ENCODE measurements at regions of chr19 and their contacts with region 1.

Region 1: DNA sequence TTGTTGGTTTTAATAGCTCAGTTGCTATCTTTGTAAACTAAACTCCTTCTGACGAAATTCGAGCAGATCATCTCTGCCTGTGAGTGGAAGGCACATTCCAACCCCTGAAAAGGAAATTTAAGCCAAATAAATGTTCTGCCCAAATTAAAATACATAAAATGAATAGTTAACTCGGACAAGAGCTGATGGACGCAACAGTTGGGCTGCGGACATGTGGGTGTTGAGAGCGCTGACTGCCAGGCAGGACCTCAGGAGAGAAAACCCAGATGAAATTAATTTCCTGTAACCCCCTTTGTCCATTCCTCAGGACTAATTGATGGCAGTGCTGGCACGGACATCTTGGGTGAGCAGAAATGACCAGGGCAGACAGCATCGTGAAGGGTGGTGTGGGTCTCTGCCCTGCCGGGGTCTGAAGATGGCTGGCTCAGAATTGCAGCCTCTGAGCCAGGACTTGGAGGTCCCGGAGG is 86.5 kb downstream of the TSHZ3 start:
- DNase-seq: peak; percentile 34
- ATAC-seq: peak; percentile 64
- H3K4me3 ChIP-seq: no peak overlapping the region
- H3K27ac ChIP-seq: peak overlapping the region; percentile 4
- H3K4me1 ChIP-seq: peaks cover 11% of the 10 kb centered on the region
- H3K27me3 ChIP-seq: no peaks in the 10 kb centered on the region
- CTCF ChIP-seq: no peak
- POLR2A ChIP-seq: no peak
- RAD21 ChIP-seq: no peak

Region 2: GRCh38 chr19:31037286-31037980 is 225.3 kb before region 1 on chr19:
- CTCF ChIA-PET with region 1: no interaction called
- POLR2A ChIA-PET with region 1: no interaction called
- dilution Hi-C with region 1: no loop called
- in situ Hi-C with region 1: no loop called
- intact Hi-C with region 1: no loop called
- DNase-seq: no peak
- ATAC-seq: no peak
- H3K4me3 ChIP-seq: no peak overlapping the region
- H3K27ac ChIP-seq: no peak overlapping the region
- H3K4me1 ChIP-seq: no peaks in the 10 kb centered on the region
- H3K27me3 ChIP-seq: peaks cover 3% of the 10 kb centered on the region
- CTCF ChIP-seq: no peak
- POLR2A ChIP-seq: no peak
- RAD21 ChIP-seq: no peak

Region 3: DNA sequence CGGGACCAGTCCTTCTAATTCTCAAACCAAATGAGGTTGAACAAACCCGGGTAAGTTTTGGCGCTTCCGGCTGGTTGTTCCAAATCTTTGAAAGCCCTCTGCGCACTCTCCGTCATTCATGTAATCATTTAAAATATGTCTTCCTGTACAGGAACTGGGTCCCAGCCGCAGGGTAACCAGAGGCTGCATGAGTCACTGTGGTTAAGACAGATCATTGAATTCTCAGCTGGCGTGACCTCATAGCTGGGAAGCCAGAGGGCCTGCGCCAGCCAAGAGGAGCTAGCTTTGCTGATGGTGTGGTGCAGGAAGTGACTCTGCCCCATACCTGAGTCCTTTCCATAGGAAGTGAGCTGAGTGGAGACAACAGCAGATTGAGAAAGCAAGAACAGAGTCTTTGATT is 48.7 kb before region 1 on chr19:
- CTCF ChIA-PET with region 1: no interaction called
- POLR2A ChIA-PET with region 1: no interaction called
- dilution Hi-C with region 1: no loop called
- in situ Hi-C with region 1: no loop called
- intact Hi-C with region 1: no loop called
- DNase-seq: peak; percentile 100
- ATAC-seq: peak; percentile 95
- H3K4me3 ChIP-seq: no peak overlapping the region
- H3K27ac ChIP-seq: peak overlapping the region; percentile 90
- H3K4me1 ChIP-seq: peaks cover 14% of the 10 kb centered on the region
- H3K27me3 ChIP-seq: no peaks in the 10 kb centered on the region
- CTCF ChIP-seq: no peak
- POLR2A ChIP-seq: no peak; the same call in 1 of the 2 replicates
- RAD21 ChIP-seq: peak; percentile 41

Region 4: DNA sequence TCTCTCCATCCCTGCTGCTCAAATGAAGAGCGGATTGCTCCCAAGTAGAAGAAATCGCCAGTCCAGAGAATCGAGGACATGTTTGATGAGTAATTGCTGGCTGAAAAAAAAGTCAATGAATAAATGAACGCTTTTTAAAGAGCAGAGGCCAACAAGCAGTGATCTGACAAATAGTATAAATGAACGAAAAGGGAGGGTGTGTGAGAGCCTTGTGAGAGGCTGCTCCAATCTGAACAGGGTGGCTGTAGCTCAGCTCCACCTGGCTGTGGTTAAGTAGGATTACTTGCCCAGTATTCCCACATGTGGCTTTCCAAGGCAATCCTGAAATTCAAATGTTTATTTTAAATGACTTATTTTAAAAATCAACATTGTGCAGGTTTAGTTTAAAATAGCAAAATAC is 30.6 kb before region 1 on chr19:
- CTCF ChIA-PET with region 1: interaction called, 3 read pairs
- POLR2A ChIA-PET with region 1: interaction called, 17 read pairs
- dilution Hi-C with region 1: no loop called
- in situ Hi-C with region 1: no loop called
- intact Hi-C with region 1: loop called (anchors 2 kb)
- DNase-seq: peak; percentile 72
- ATAC-seq: no peak
- H3K4me3 ChIP-seq: no peak overlapping the region
- H3K27ac ChIP-seq: peak overlapping the region; percentile 56
- H3K4me1 ChIP-seq: peaks cover 9% of the 10 kb centered on the region
- H3K27me3 ChIP-seq: no peaks in the 10 kb centered on the region
- CTCF ChIP-seq: no peak
- POLR2A ChIP-seq: no peak
- RAD21 ChIP-seq: peak; percentile 24